HEK293 (cell line): ENCODE measurements at regions of chr12 and their contacts with region 1.

Region 1: DNA sequence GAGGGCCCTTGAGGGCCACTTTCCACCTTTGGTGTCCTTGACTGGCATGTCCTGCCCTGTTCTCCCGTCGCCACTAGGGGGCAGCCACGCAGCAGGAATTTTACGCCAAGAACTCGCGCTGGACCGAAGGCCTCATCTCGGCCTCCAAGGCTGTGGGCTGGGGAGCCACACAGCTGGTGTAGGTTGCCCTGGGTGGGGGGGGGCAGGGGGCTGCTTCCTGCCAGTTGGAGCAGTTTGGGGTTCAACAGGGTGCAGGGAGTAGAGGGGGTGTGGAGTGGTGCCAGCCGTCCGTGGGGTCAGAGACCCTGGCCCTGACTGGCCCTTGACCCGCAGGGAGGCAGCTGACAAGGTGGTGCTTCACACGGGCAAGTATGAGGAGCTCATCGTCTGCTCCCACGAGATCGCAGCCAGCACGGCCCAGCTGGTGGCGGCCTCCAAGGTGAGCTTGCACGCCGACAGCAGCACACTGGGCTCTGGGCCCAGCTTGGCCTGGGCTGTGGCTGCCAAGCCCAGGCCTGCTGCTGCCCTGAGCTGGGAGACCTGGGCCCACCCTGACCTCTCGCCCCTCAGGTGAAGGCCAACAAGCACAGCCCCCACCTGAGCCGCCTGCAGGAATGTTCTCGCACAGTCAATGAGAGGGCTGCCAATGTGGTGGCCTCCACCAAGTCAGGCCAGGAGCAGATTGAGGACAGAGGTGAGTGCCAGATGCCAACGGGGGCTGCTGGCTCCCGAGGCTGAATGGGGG is 25.3 kb downstream of the HIP1R start:
- H3K4me3 ChIP-seq: no peak overlapping the region
- H3K27ac ChIP-seq: no peak overlapping the region
- H3K4me1 ChIP-seq: no peaks in the 10 kb centered on the region
- CTCF ChIP-seq: peak; percentile 86

Region 2: DNA sequence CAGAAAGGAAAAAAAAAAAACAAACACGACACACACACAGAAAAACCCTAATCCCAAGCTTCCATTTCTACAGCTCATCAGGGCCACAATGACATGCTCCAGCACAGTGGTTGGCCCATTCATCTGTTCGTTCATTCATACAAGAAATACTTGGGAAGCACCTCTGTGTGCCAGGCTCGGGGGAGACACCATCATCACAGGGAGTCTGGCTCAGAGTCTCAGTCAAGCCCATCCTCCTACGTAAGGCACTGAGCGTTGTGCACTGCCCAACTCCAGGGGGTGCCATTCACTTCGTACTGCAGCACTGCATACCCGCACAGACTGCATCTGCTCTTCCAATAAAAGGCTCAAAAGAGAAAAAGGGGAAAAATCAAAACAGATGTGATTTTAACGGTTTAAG is 20.1 kb after region 1 on chr12:
- CTCF ChIA-PET with region 1: interaction called, 11 read pairs
- POLR2A ChIA-PET with region 1: no interaction called
- H3K4me3 ChIP-seq: no peak overlapping the region
- H3K27ac ChIP-seq: no peak overlapping the region
- H3K4me1 ChIP-seq: peaks cover 28% of the 10 kb centered on the region
- CTCF ChIP-seq: peak; percentile 70

Region 3: DNA sequence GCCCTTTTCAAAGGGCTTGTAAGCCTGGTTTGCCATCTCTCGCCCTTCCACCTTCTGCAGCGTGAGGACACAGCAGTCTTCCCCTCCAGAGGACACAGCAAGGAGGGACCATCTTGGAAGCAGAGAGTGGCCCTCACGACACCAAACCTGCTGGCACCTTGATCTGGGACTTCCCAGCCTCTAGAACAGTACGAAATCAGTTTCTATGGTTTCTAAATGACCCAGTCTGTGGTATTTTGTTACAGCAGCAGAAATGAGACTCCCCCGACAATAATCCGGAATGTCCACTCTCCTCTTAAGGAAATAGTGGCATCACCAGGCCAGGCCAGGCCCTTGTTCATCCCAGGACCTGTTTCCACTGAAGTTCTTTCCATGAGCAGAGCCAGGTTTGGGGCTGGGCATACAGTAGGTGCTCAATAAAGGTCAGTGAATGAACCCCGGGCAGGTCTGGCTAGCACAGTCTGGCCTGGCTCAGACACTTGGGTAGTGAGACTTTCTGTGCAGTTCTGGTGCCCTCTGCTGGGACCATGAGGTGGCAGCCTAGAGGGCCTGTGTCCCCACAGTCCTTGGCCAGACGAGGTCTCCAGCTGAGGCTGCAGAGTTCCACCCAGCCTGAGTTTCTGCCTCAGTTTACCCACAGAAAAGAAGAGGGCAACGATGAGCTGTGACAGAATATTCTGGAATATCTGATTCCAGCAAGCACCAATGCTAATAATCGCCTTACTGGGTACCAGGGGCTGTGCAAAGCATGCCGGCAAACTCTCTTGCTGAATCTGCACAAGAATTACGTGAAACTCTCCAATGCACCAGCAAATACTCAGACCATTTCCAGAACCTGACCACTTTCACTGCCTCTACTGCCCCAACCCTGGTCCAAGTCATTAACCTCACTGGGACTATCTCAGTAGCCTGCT is 91.7 kb after region 1 on chr12:
- CTCF ChIA-PET with region 1: interaction called, 105 read pairs
- POLR2A ChIA-PET with region 1: interaction called, 3 read pairs
- H3K4me3 ChIP-seq: no peak overlapping the region
- H3K27ac ChIP-seq: no peak overlapping the region
- H3K4me1 ChIP-seq: no peaks in the 10 kb centered on the region
- CTCF ChIP-seq: peak; percentile 90